Calu3 (cell line): ENCODE measurements at regions of chr18 and their contacts with region 1.

Region 1: GRCh38 chr18:66511810-66512209 is 92.1 kb downstream of the CDH19 start:
- DNase-seq: peak; percentile 24
- H3K4me3 Mint-ChIP-seq: peak overlapping the region; percentile 1
- H3K27ac Mint-ChIP-seq: peak overlapping the region; percentile 90
- H3K4me1 Mint-ChIP-seq: peaks cover 43% of the 10 kb centered on the region
- H3K27me3 Mint-ChIP-seq: no peaks in the 10 kb centered on the region
- CTCF ChIP-seq: no peak

Region 2: GRCh38 chr18:66599190-66599589 is 87.4 kb after region 1 on chr18:
- CTCF ChIA-PET with region 1: no interaction called
- intact Hi-C with region 1: loop called (anchors 2 kb)
- DNase-seq: peak; percentile 77
- H3K4me3 Mint-ChIP-seq: peak overlapping the region; percentile 14
- H3K27ac Mint-ChIP-seq: peak overlapping the region; percentile 95
- H3K4me1 Mint-ChIP-seq: peaks cover 23% of the 10 kb centered on the region
- H3K27me3 Mint-ChIP-seq: no peaks in the 10 kb centered on the region
- CTCF ChIP-seq: no peak